ENCODE measurements at regions of chr2 and their contacts with region 1.

Region 1: DNA sequence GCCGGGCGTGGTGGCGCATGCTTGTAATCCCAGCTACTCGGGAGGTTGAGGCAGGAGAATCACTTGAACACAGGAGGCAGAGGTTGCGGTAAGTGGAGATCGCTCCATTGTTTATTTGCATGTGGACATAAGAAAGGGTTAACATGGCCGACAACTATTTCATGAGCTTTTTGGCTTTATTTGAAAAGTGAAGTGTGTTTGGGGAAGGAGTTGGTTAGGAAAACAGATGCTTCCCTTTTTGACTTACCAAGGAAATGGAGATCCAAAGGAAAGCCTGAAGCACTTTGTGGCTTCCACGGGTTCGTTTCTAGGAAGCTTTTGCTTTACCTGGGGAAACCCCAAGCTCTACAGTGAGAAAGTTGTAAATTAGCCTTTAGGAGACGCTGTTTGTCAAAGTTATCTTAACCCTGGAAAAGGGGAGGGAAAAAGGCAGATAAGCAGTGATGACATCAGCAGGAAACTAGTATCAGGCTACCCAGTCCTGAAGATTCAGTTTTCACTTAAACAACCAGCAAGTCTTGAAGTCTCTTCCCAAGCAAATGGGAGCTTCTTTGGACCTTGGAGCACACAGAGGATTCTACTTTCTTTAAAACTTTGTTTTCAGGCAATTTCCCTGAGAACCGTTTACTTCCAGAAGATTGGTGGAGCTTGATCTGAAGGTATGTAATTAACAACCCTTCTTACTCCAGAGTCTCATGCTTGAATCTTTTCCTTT is at the start of gene CASP10:
- DNase-seq: peak; percentile 70
- CTCF ChIP-seq: no peak

Region 2: DNA sequence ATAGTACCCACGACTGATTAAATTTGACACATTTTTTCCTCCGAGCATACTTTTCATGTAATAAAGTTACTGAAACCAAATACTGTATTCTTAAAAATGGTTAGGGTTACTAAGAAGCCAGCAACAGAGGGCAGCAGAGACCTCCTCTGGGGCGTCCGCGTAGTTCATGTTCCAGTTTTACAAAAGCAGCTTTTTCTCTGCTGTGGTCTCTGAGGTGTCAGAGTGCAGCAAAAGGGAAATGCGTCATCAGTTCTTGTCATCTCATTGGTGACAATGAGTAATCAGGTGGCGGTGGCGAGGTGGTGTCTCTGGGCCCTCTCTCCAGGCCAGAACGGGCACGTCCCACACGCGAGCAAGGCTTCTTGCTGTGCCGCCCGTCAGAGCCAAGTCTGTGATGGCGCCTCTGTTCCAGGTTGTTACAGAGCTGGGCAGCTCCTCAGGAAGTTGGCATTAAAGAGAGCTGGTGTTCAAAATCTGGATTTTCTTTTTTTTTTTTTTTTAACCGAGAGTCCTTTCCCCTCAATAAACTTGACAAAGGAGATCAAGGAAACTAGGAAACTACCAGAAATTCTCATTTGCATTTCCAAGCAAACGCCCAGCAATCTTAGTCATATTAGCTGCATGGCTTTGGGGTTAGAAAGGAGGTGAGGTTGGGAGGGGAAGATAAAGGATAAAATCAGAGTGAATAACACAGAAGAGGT is 469.7 kb before region 1 on chr2:
- in situ Hi-C with region 1: loop called (anchors 25 kb)
- DNase-seq: peak; percentile 84
- CTCF ChIP-seq: peak; percentile 31

Region 3: GRCh38 chr2:200901459-200902072 is 281.2 kb before region 1 on chr2:
- in situ Hi-C with region 1: loop called (anchors 10 kb)
- DNase-seq: peak; percentile 84
- CTCF ChIP-seq: peak; percentile 34

Region 4: GRCh38 chr2:201228271-201228913 is 45.6 kb after region 1 on chr2:
- in situ Hi-C with region 1: loop called (anchors 5 kb)
- DNase-seq: no peak
- CTCF ChIP-seq: no peak

Measured in GM13976 (cell line).